ENCODE measurements at regions of chr17 and their contacts with region 1.

Region 1: DNA sequence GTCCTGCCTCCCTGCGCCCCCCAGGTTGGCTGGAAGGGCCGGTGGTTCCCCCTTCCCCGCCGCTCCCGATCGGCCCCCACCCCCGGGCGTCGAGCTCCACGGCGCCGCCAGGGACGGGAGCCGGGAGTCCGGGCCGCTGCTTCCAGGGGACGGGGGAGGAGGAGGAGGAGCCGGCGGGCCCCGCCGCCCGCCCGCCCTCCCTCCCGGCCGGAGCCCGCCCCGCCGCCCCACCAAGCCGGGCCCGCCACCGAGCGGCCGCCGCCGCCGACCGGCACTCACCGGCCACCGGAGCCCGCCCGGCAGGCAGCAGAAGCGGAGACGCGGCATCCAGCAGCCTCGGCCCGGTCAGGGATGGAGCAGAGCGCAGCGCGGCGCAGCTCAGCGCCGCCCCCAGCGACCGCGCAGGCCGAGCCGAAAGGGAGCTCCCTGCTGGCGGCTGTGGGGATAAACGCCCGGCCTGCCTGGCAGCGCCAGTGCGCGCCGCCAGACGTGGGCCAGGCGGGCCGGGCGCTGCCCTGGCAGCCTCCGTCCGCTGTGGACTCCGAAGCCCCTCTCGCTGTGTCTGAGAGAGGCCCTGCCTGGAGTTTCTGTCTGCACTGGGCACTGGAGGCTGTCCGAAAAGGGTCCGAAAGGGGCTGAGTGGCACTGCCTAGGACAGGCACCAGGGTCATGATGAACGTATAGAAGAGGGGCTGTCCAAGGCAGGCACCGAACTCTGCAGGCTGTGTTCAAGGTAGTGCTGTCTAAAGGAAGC is at the start of gene MYO18A:
- DNase-seq: peak; percentile 76
- H3K4me3 Mint-ChIP-seq: peak within 1 kb of the TSS; percentile 81
- H3K27ac Mint-ChIP-seq: peak within 1 kb of the TSS; percentile 93
- H3K4me1 Mint-ChIP-seq: peaks cover 34% of the 10 kb centered on the region
- H3K27me3 Mint-ChIP-seq: no peaks in the 10 kb centered on the region
- CTCF ChIP-seq: peak; percentile 76
- total RNA-seq, gene MYO18A: 24.0 and 24.8 TPM in 2 replicates

Region 2: GRCh38 chr17:28792877-28793661 is 387.1 kb before region 1 on chr17:
- CTCF ChIA-PET with region 1: no interaction called
- POLR2A ChIA-PET with region 1: no interaction called
- intact Hi-C with region 1: no loop called
- DNase-seq: no peak
- H3K4me3 Mint-ChIP-seq: no peak overlapping the region
- H3K27ac Mint-ChIP-seq: peak overlapping the region; percentile 46
- H3K4me1 Mint-ChIP-seq: peaks cover 6% of the 10 kb centered on the region
- H3K27me3 Mint-ChIP-seq: no peaks in the 10 kb centered on the region
- CTCF ChIP-seq: no peak

Region 3: GRCh38 chr17:29148790-29149430 is 31.3 kb before region 1 on chr17:
- CTCF ChIA-PET with region 1: interaction called, 191 read pairs
- POLR2A ChIA-PET with region 1: interaction called, 231 read pairs
- intact Hi-C with region 1: loop called (anchors 1 kb)
- DNase-seq: peak; percentile 92
- H3K4me3 Mint-ChIP-seq: peak overlapping the region; percentile 61
- H3K27ac Mint-ChIP-seq: peak overlapping the region; percentile 85
- H3K4me1 Mint-ChIP-seq: peaks cover 60% of the 10 kb centered on the region
- H3K27me3 Mint-ChIP-seq: no peaks in the 10 kb centered on the region
- CTCF ChIP-seq: peak; percentile 98

Region 4: GRCh38 chr17:29162738-29163341 is 17.4 kb before region 1 on chr17:
- CTCF ChIA-PET with region 1: interaction called, 8 read pairs
- POLR2A ChIA-PET with region 1: interaction called, 168 read pairs
- intact Hi-C with region 1: no loop called
- DNase-seq: no peak
- H3K4me3 Mint-ChIP-seq: no peak overlapping the region
- H3K27ac Mint-ChIP-seq: no peak overlapping the region
- H3K4me1 Mint-ChIP-seq: peaks cover 16% of the 10 kb centered on the region
- H3K27me3 Mint-ChIP-seq: no peaks in the 10 kb centered on the region
- CTCF ChIP-seq: no peak

Region 5: GRCh38 chr17:29219378-29220047 is 39.3 kb after region 1 on chr17:
- CTCF ChIA-PET with region 1: interaction called, 33 read pairs
- POLR2A ChIA-PET with region 1: interaction called, 8 read pairs
- intact Hi-C with region 1: no loop called
- DNase-seq: peak; percentile 83
- H3K4me3 Mint-ChIP-seq: no peak overlapping the region
- H3K27ac Mint-ChIP-seq: no peak overlapping the region
- H3K4me1 Mint-ChIP-seq: peaks cover 23% of the 10 kb centered on the region
- H3K27me3 Mint-ChIP-seq: no peaks in the 10 kb centered on the region
- CTCF ChIP-seq: peak; percentile 87

Region 6: DNA sequence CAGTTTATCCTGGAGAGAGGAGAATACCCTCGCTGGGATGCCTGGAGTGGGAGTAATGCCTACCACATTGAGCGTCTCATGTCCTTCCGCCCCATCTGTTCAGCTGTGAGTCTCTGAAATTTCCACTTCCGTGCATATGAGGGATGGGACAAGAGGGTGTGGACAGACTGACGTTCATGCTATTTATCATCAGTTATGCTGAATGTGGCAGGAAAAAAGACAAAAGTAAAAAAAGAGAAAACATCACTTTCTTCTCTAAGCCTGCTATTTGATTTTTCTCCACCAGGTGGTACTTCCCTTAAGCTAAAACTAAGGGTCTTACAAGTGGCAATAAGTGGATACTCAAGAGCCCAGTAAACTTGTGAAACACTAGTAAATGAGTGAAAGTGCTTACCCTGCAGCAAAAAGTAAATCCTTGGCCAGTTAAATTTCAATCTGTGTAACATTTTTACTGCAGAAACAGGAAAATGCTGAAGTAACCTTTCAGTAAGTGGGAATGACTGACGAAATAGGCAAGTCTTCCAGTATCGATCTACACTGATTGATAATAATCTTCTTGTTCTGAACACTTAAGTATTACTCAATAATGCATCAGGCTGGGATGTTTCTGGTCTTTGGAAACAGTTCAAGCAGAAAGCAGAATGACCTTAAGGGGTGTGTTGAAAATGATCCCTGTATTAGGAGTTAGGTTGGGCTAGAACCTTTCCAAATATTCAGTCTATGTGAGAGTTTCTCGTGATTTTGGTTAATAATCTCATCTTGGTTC is 72.1 kb after region 1 on chr17:
- CTCF ChIA-PET with region 1: interaction called, 5 read pairs
- POLR2A ChIA-PET with region 1: interaction called, 22 read pairs
- intact Hi-C with region 1: no loop called
- DNase-seq: no peak
- H3K4me3 Mint-ChIP-seq: no peak overlapping the region
- H3K27ac Mint-ChIP-seq: peak overlapping the region; percentile 22
- H3K4me1 Mint-ChIP-seq: peaks cover 30% of the 10 kb centered on the region
- H3K27me3 Mint-ChIP-seq: no peaks in the 10 kb centered on the region
- CTCF ChIP-seq: peak; percentile 62

Region 7: DNA sequence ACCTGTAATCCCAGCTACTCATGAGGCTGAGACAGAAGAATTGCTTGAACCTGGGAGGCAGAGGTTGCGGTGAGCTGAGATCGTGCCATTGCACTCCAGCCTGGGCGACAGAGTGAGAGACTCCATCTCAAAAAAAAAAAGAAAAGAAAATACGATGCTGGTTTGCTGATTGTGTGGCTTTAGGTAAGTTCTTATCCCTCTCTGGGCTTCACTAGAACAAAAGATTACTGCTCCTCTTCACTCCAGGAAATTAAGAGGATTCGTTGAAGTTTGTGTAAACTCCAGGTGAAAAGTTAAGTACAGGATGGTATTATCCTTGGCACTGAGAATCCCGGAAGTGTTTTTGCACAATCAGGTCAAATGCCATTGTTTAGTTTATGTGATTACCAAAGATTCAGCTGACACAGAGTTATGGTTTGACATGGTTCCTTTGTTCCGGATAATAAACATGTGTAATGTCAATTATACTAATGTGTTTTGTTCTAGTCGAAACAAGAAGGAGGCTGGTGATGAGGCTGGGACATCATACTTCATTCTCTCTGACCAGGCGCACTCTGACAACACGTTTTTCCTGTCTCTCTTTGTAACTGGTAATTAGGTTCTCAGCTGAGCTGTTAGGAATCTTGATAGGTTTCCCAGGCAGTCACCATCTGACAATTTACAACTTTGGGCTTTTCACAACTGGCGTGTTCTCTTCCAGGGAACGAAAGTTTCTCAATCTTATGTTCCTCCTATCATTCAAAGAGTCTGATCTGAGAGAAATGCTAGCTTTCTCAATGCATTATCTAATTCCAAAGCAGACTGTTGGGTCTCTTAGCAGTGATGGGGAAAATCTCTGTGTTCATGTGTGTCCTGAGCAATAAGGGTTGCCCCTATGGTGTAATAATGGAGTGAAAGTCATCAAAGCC is 199.1 kb after region 1 on chr17:
- CTCF ChIA-PET with region 1: no interaction called
- POLR2A ChIA-PET with region 1: no interaction called
- intact Hi-C with region 1: no loop called
- DNase-seq: peak; percentile 68
- H3K4me3 Mint-ChIP-seq: no peak overlapping the region
- H3K27ac Mint-ChIP-seq: peak overlapping the region; percentile 28
- H3K4me1 Mint-ChIP-seq: peaks cover 25% of the 10 kb centered on the region
- H3K27me3 Mint-ChIP-seq: no peaks in the 10 kb centered on the region
- CTCF ChIP-seq: no peak

Region 8: GRCh38 chr17:29589524-29590410 is 409.6 kb after region 1 on chr17 and contains the start of gene GIT1:
- CTCF ChIA-PET with region 1: no interaction called
- POLR2A ChIA-PET with region 1: no interaction called
- intact Hi-C with region 1: no loop called
- DNase-seq: peak; percentile 83
- H3K4me3 Mint-ChIP-seq: peak within 1 kb of the TSS; percentile 83
- H3K27ac Mint-ChIP-seq: peak within 1 kb of the TSS; percentile 82
- H3K4me1 Mint-ChIP-seq: peaks cover 23% of the 10 kb centered on the region
- H3K27me3 Mint-ChIP-seq: no peaks in the 10 kb centered on the region
- CTCF ChIP-seq: no peak
- total RNA-seq, gene GIT1: 49.0 and 52.6 TPM in 2 replicates